Sigmoid colon (tissue), 7 donors: ENCODE measurements at regions of chr3 and their contacts with region 1.

Region 1: GRCh38 chr3:15427182-15427880 is at the starts of genes EAF1 and METTL6:
- DNase-seq: peak; percentile 86
- H3K4me3 ChIP-seq: peak within 1 kb of the TSS; percentile 82 to 95 (median 94)
- H3K27ac ChIP-seq: peak within 1 kb of the TSS; percentile 83 to 84 (median 84)
- H3K4me1 ChIP-seq: peaks cover 0 to 39% (median 35%) of the 10 kb centered on the region in 4 donors
- H3K27me3 ChIP-seq: no peaks in the 10 kb centered on the region
- CTCF ChIP-seq: peak in 2 of 4 experiments; percentile 30 to 36
- EP300 ChIP-seq: no peak
- POLR2A ChIP-seq: no peak
- total RNA-seq, gene EAF1: 10.0 to 17.8 (median 14.9) TPM
- total RNA-seq, gene METTL6: 14.3 to 21.9 (median 15.3) TPM

Region 2: DNA sequence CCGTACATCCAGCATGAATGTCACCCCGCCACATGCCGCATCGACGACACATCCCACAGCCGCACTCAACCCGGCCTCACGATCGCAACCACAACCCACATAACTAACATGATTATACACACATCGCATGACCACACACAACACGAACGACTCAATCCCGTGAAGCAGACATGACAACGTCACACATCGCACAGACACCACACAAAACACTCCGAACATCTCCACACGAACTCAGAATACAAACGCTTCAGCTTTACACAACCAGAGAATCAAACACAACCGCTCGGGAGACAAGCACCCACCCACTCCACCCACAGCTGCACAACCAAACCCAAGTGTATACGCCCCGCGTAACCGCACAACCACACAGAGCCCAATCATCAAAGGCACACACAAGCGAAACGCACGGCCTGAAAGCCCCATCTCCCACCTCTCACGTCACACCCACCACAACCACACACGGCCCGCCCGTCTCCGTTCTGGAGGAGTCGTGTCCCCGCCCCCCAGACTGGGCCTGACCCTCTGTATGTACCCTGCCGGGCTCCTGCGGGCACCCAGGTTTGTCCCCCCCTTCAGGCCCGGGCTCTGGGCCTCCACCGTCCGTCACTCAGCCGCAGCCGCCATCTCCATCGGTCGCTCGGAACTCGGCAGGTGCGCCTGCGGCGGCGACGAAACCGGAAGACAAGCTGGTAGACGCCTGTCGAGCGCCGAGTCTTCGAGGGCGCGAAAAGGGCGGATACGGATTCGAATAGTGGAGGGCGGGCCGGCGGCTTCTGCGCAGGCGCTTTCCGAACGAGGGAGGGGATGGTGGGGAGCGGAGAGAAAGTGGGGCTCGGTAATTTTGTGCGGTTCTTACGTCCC is 328.6 kb before region 1 on chr3 and contains the start of gene RBSN:
- intact Hi-C with region 1: loop called (anchors 5 kb)
- DNase-seq: peak; percentile 97
- H3K4me3 ChIP-seq: peak within 1 kb of the TSS; percentile 72 to 84 (median 78)
- H3K27ac ChIP-seq: peak within 1 kb of the TSS; percentile 84 to 89 (median 86)
- H3K4me1 ChIP-seq: peaks cover 0 to 49% (median 30%) of the 10 kb centered on the region in 4 donors
- H3K27me3 ChIP-seq: no peaks in the 10 kb centered on the region
- CTCF ChIP-seq: no peak
- EP300 ChIP-seq: peak in 1 of 4 donors; percentile 19
- POLR2A ChIP-seq: peak; percentile 87 to 89
- total RNA-seq, gene RBSN: 29.1 to 41.3 (median 38.0) TPM

Region 3: DNA sequence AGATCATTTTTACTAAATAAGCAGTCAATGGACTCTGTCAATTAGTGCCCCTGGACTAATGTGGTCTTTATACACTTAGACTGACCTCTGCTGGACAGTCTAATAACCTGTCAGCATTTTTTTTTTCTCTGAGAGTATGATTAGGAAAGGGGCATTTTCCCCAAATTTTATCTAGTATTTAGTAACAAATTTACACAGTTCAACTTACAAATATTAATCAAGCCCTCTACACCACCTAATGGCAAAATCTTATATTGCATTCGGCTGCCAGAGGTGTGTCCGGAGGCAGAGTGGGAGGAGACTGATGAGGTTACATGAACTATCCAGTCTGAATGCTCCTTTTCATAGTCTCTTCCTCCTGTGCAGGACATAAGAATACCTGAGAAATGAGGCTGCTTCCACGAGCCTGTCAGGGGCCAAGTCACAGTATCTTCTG is 130.2 kb after region 1 on chr3:
- intact Hi-C with region 1: loop called (anchors 2 kb)
- DNase-seq: no peak
- H3K4me3 ChIP-seq: no peak overlapping the region
- H3K27ac ChIP-seq: no peak overlapping the region
- H3K4me1 ChIP-seq: no peaks in the 10 kb centered on the region
- H3K27me3 ChIP-seq: no peaks in the 10 kb centered on the region
- CTCF ChIP-seq: peak in 2 of 4 experiments; percentile 30 to 49
- EP300 ChIP-seq: no peak
- POLR2A ChIP-seq: no peak

Region 4: GRCh38 chr3:16828815-16829214 is 1401.5 kb after region 1 on chr3:
- intact Hi-C with region 1: no loop called
- DNase-seq: no peak
- H3K4me3 ChIP-seq: no peak overlapping the region
- H3K27ac ChIP-seq: no peak overlapping the region
- H3K4me1 ChIP-seq: no peaks in the 10 kb centered on the region
- H3K27me3 ChIP-seq: no peaks in the 10 kb centered on the region
- CTCF ChIP-seq: no peak
- EP300 ChIP-seq: no peak
- POLR2A ChIP-seq: no peak